Esophagus squamous epithelium (tissue), 5 donors: ENCODE measurements at regions of chr12 and their contacts with region 1.

Region 1: GRCh38 chr12:121811434-121812319 is 7.9 kb downstream of the SETD1B start:
- DNase-seq: no peak
- H3K4me3 ChIP-seq: peak overlapping the region; percentile 46 to 62 (median 61)
- H3K27ac ChIP-seq: peak overlapping the region; percentile 57 to 80 (median 76)
- H3K4me1 ChIP-seq: peaks cover 43 to 63% (median 46%) of the 10 kb centered on the region in 3 donors
- H3K27me3 ChIP-seq: no peaks in the 10 kb centered on the region
- CTCF ChIP-seq: peak; percentile 98 to 100 (median 99)
- POLR2A ChIP-seq: no peak

Region 2: GRCh38 chr12:121888478-121889266 is 77.0 kb after region 1 on chr12 and contains the start of gene PSMD9:
- intact Hi-C with region 1: loop called (anchors 10 kb)
- DNase-seq: peak; percentile 82
- H3K4me3 ChIP-seq: peak within 1 kb of the TSS; percentile 75 to 89 (median 82)
- H3K27ac ChIP-seq: peak within 1 kb of the TSS; percentile 95 to 98 (median 98)
- H3K4me1 ChIP-seq: peaks cover 12 to 46% (median 24%) of the 10 kb centered on the region in 3 donors
- H3K27me3 ChIP-seq: peaks cover 0 to 10% (median 0%) of the 10 kb centered on the region in 4 donors
- CTCF ChIP-seq: peak; percentile 16 to 75 (median 54)
- POLR2A ChIP-seq: peak in 3 of 4 donors; percentile 39 to 83 (median 72)
- total RNA-seq, gene PSMD9: 52.1 to 104 (median 71.4) TPM